Mammary epithelial cell (primary cell): ENCODE measurements at regions of chr3 and their contacts with region 1.

Region 1: DNA sequence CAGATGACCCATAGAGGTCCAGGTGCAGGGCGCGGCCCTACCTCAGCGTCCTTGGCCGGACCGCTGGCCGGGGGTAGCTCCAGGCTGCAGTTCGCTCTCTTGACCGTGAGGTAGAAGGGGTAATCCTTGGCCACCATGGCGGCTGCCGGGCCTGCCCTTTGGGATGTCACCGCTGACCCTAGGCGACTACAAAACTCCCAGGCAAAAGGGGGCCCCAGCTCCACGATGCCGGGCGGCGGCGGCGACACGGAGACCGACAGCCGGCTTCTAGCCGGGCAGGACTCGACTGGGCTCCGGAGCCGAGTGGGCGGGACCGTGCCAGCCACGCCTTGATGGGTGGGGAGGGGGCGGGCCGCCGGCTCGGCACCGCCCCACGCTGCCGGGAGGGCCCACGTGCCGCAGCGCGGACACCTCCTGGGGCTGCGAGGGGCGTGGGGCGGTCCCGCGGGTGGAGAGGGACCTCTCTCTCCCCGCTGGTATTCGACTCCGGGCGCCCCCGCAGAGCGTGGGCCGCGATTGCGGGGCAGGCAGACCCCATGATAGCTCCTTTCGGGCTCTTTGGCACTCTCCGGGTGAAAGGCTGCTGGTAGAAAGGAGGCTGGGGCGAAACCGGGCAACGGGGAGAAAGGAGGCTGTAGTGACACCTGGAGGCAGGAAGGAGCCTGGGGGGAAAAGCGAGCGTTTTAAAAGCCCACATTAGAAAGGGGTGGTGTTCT is at the start of gene ARHGEF3:
- DNase-seq: peak; percentile 85
- H3K4me3 ChIP-seq: peak within 1 kb of the TSS; percentile 57 to 93 (median 72)
- H3K27ac ChIP-seq: peak within 1 kb of the TSS; percentile 80
- H3K4me1 ChIP-seq: peaks cover 19% of the 10 kb centered on the region
- H3K27me3 ChIP-seq: no peaks in the 10 kb centered on the region
- CTCF ChIP-seq: peak; percentile 45 to 65
- total RNA-seq, gene ARHGEF3: 17.5 to 43.7 TPM

Region 2: DNA sequence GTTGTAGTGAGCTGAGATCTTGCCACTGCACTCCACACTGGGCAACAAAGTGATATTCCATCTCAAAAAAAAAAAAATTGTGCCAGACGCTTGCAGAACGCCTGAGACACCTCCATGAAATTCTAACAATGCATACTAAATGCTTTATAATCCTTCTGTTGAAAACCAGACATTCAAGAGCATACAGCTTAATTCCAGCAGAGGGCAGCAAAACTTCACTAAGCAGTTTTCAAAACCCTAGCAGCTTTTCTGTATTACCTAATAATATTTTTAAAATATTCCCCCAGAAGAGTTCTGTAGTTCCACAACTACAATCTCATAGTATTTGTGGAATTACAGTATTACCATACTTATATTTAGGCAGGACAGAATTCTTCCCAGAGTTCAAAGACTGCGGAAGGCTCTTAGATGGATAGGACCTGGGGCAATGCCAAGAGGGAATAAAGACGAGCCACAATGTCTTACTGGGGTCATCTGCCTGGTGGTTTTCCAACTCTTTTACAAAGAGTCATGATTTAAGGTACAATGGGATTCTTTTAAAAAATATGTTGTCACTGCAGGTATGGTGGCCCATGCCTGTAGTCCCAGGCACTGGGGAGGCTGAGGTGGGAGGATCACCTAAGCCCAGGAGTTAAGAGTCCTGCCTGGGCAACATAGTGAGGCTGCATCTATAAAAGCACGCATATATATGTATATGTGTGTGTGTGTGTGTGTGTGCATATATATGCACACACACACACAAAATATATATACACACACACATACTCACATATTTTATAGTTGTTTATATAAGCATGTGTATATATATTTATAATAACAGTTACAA is 99.1 kb before region 1 on chr3:
- CTCF ChIA-PET with region 1: interaction called, 19 read pairs
- dilution Hi-C with region 1: no loop called
- in situ Hi-C with region 1: loop called (anchors 10 kb)
- intact Hi-C with region 1: loop called (anchors 1 kb)
- DNase-seq: peak; percentile 52
- H3K4me3 ChIP-seq: no peak overlapping the region
- H3K27ac ChIP-seq: no peak overlapping the region
- H3K4me1 ChIP-seq: peaks cover 9% of the 10 kb centered on the region
- H3K27me3 ChIP-seq: no peaks in the 10 kb centered on the region
- CTCF ChIP-seq: peak; percentile 80 to 83

Region 3: DNA sequence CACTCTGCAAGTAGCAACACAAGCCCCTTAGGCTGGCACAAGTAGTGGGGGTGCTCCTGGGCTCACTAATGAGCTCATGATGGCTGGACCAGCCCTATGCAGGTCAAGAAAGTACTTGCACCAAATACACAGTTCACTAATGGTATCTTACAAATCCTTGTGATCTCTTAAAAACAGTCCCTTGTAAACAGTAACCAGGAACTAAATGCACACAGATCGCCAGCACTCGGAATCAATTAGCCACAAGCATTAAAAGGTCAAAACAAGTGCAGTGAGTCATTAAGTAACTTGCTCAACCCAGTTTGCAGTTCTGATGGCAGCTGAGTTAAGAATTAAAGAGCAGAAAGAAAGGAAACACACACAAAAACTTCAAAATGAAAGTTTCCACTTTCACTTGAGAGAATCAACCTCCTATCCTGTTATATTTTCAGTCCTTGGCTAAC is 43.3 kb before region 1 on chr3:
- CTCF ChIA-PET with region 1: interaction called, 3 read pairs
- dilution Hi-C with region 1: no loop called
- in situ Hi-C with region 1: no loop called
- intact Hi-C with region 1: loop called (anchors 2 kb)
- DNase-seq: peak; percentile 87
- H3K4me3 ChIP-seq: no peak overlapping the region
- H3K27ac ChIP-seq: peak overlapping the region; percentile 64
- H3K4me1 ChIP-seq: peaks cover 14% of the 10 kb centered on the region
- H3K27me3 ChIP-seq: no peaks in the 10 kb centered on the region
- CTCF ChIP-seq: no peak

Region 4: DNA sequence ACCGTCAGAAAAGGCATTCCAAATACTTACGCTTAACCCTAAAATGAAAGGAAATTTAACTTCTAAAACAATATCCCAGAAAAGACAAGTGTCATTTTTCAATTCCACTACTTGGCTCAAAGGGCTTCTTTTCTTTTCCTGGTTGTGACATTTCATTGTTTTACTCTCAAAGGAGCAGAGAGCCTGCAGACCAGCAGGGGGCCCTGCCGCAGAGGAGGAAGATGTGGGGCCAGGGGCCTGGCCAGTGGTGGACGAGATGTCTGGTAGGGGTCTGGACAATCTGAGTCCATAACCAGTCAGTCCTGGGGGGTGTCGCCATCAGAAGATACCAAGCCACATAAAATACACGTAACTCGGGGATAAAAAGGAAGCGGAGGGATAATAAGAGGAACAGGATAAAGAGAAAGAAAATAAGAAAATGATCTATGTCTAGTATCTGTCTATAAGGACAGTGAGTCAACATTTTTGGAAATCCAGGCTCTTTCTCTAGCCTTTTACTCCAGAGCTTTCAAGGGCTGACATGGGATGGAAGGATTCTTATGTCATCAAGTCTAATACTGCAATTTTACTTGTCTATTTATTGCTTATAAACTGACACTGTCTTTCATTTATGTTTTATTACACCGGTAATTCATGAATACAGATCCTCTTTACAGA is 54.2 kb after region 1 on chr3:
- CTCF ChIA-PET with region 1: interaction called, 10 read pairs
- dilution Hi-C with region 1: no loop called
- in situ Hi-C with region 1: no loop called
- intact Hi-C with region 1: loop called (anchors 5 kb)
- DNase-seq: no peak
- H3K4me3 ChIP-seq: no peak overlapping the region
- H3K27ac ChIP-seq: no peak overlapping the region
- H3K4me1 ChIP-seq: peaks cover 36% of the 10 kb centered on the region
- H3K27me3 ChIP-seq: no peaks in the 10 kb centered on the region
- CTCF ChIP-seq: peak; percentile 47 to 59

Region 5: DNA sequence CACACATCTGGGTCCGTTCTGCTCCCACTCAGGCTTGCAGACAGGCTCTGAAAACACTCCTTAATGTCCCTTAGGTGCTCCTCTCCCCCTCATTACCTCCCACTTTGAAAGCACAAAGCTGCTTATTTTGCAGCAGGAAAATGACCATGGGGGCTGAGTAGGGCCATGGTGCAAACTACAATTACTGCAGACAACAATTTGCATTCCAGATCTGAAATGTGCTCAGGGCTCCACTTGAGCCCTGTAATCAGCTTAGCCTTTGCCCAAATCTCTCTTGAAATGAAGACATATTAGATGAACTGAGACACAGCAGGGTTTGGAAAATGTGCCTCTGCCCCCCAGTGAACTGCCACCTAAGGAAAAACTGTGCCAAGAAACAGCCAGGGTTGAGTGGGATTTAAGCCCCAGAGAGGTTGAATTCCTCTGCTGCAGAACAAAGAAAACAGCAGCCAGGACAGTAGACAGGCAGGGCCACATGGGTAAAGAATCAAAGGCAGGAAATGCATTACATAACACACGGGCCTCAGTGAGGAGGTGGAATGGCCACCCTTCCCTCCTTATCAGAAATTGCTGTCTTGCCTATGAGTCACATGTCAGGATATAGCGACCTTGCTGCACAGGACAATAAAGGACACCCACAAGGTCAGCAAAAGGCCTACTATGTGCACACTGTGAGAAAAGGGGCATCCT is 126.7 kb after region 1 on chr3:
- CTCF ChIA-PET with region 1: interaction called, 3 read pairs
- dilution Hi-C with region 1: no loop called
- in situ Hi-C with region 1: no loop called
- intact Hi-C with region 1: loop called (anchors 5 kb)
- DNase-seq: no peak
- H3K4me3 ChIP-seq: no peak overlapping the region
- H3K27ac ChIP-seq: no peak overlapping the region
- H3K4me1 ChIP-seq: peaks cover 46% of the 10 kb centered on the region
- H3K27me3 ChIP-seq: no peaks in the 10 kb centered on the region
- CTCF ChIP-seq: no peak

Region 6: GRCh38 chr3:57078344-57078634 is 276.5 kb after region 1 on chr3:
- CTCF ChIA-PET with region 1: no interaction called
- dilution Hi-C with region 1: no loop called
- in situ Hi-C with region 1: no loop called
- intact Hi-C with region 1: loop called (anchors 10 kb)
- DNase-seq: peak; percentile 28
- H3K4me3 ChIP-seq: peak overlapping the region; percentile 80 to 92 (median 87)
- H3K27ac ChIP-seq: no peak overlapping the region
- H3K4me1 ChIP-seq: peaks cover 6% of the 10 kb centered on the region
- H3K27me3 ChIP-seq: no peaks in the 10 kb centered on the region
- CTCF ChIP-seq: no peak